B cell (primary cell): ENCODE measurements at regions of chr2 and their contacts with region 1.

Region 1: DNA sequence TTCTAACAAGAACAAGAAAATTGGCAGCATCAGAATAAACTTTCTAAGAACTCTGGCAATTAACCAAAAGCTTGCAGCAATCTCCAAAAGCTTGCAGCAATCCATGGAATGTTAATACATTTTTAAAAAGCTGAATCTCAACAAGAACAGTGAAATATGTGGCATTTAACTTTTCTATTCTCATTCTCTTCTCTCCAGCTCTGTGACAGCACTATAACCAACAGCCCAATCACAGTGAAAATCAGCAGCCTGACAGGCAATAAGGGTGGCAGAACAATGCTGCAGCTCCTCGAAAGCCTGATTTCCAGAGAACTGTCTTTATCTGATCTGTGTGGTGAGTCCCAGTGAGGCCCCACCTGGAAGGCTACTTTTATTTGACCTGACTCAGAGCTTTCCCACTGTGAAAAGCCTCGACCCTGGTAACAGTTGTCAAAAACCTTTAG is 60.0 kb downstream of the TMEM131 start:
- DNase-seq: no peak
- ATAC-seq: no peak
- H3K4me3 ChIP-seq: no peak overlapping the region
- H3K4me3 Mint-ChIP-seq: peak overlapping the region; percentile 66
- H3K27ac ChIP-seq: peak overlapping the region; percentile 2 to 70
- H3K27ac Mint-ChIP-seq: peak overlapping the region; percentile 64
- H3K4me1 ChIP-seq: peaks cover 52 to 64% of the 10 kb centered on the region in 2 donors
- H3K4me1 Mint-ChIP-seq: peaks cover 91% of the 10 kb centered on the region
- H3K27me3 ChIP-seq: no peaks in the 10 kb centered on the region
- H3K27me3 Mint-ChIP-seq: no peaks in the 10 kb centered on the region
- CTCF ChIP-seq: no peak

Region 2: DNA sequence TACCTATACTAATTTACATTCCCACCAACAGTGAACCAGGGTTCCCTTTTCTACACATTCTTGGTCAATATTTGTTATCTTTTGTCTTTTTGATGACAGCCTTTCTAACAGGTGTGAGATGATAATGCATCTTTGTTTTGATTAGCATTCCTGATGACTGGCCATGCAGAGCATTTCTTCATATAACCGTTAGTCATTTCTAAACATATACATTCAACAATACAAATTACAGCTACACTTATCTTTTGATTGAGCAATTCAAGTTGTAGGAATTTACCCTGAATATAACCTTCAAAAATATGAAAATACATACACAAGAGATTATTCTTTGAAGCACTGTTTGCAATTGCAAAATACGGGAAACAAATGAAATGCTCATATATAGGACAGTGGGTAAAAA is 34.9 kb before region 1 on chr2:
- CTCF ChIA-PET with region 1: no interaction called
- POLR2A ChIA-PET with region 1: no interaction called
- intact Hi-C with region 1: loop called (anchors 5 kb)
- DNase-seq: no peak
- ATAC-seq: no peak
- H3K4me3 ChIP-seq: no peak overlapping the region
- H3K4me3 Mint-ChIP-seq: no peak overlapping the region
- H3K27ac ChIP-seq: no peak overlapping the region
- H3K27ac Mint-ChIP-seq: no peak overlapping the region
- H3K4me1 ChIP-seq: no peaks in the 10 kb centered on the region
- H3K4me1 Mint-ChIP-seq: peaks cover 13% of the 10 kb centered on the region
- H3K27me3 ChIP-seq: no peaks in the 10 kb centered on the region
- H3K27me3 Mint-ChIP-seq: no peaks in the 10 kb centered on the region
- CTCF ChIP-seq: no peak

Region 3: DNA sequence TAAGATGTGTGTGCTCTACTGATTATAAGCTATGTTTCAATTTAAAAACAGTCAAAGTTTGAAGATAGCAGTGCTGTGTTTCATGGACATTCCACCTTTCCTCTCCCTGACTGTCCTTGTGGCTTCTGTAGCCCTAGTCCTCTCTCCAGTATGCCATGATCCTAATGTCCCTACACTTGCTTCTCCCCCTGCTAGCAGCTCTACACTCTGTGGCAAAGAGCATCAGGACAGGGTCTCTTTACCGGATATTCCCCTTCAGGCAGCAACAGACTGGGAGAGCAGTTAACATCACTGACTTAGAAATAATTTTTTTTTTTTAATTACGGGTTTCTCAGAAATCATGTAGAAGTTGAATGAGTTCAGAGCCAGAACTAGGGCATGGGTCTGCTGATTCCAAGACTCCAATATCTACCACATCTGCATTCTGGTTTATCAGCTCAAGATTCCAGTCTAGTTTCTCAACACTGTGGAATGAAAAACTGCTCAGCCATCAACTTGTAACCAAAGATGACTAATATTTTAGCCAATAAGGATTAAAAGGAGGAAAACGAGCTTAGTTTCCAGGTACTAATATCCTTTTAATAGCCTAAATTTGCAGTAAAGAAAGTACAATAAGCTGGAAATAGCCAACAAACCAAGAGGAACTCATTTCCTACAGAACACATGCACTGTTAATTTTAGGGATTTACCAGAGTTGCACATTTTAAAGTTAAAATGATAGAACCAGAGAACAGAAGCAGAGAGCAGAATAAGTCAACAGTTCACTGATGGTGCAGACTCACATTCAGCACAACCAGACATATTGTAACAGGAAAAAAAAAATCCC is 14.8 kb after region 1 on chr2:
- CTCF ChIA-PET with region 1: interaction called, 6 read pairs
- POLR2A ChIA-PET with region 1: interaction called, 5 read pairs
- intact Hi-C with region 1: loop called (anchors 2 kb)
- DNase-seq: no peak
- ATAC-seq: no peak
- H3K4me3 ChIP-seq: no peak overlapping the region
- H3K4me3 Mint-ChIP-seq: peak overlapping the region; percentile 11
- H3K27ac ChIP-seq: no peak overlapping the region
- H3K27ac Mint-ChIP-seq: peak overlapping the region; percentile 33
- H3K4me1 ChIP-seq: peaks cover 28 to 54% of the 10 kb centered on the region in 2 donors
- H3K4me1 Mint-ChIP-seq: peaks cover 83% of the 10 kb centered on the region
- H3K27me3 ChIP-seq: no peaks in the 10 kb centered on the region
- H3K27me3 Mint-ChIP-seq: no peaks in the 10 kb centered on the region
- CTCF ChIP-seq: no peak

Region 4: DNA sequence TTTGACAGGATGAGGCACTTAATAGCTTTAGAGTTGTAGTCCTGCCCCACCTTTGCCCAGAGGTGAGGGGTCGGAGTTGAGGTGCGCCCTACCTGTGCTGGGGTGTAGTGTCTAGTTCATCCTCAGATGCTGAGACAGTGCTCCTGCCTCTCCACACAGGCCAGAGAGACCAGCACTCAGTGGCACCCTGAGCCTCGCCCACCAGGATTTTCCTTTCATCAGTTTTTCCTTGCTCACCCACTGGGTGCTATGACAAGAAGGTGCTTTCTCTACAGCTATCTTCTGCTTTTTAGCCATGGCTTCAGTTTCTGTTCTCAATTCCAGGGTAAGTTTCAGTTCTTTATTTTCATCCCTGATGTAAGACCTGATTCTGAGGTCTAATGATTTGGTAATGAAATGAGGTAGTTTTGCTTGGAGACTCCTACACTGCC is 76.8 kb after region 1 on chr2:
- CTCF ChIA-PET with region 1: interaction called, 3 read pairs
- POLR2A ChIA-PET with region 1: interaction called, 3 read pairs
- intact Hi-C with region 1: loop called (anchors 2 kb)
- DNase-seq: peak; percentile 91
- ATAC-seq: peak; percentile 86
- H3K4me3 ChIP-seq: peak overlapping the region in 4 of 5 experiments; percentile 9 to 55 (median 30)
- H3K4me3 Mint-ChIP-seq: peak overlapping the region; percentile 78
- H3K27ac ChIP-seq: peak overlapping the region; percentile 90 to 94
- H3K27ac Mint-ChIP-seq: peak overlapping the region; percentile 98
- H3K4me1 ChIP-seq: peaks cover 68 to 76% of the 10 kb centered on the region in 2 donors
- H3K4me1 Mint-ChIP-seq: peaks cover 66% of the 10 kb centered on the region
- H3K27me3 ChIP-seq: no peaks in the 10 kb centered on the region
- H3K27me3 Mint-ChIP-seq: no peaks in the 10 kb centered on the region
- CTCF ChIP-seq: no peak